Motor neuron (in vitro differentiated cells): ENCODE measurements at regions of chr2 and their contacts with region 1.

Region 1: GRCh38 chr2:200578778-200579177 is 7.0 kb upstream of the AOX1 start:
- ATAC-seq: peak in 2 of 8 experiments; percentile 53 to 62
- H3K4me3 ChIP-seq: no peak overlapping the region
- H3K27ac ChIP-seq: no peak overlapping the region
- H3K4me1 ChIP-seq: no peaks in the 10 kb centered on the region

Region 2: DNA sequence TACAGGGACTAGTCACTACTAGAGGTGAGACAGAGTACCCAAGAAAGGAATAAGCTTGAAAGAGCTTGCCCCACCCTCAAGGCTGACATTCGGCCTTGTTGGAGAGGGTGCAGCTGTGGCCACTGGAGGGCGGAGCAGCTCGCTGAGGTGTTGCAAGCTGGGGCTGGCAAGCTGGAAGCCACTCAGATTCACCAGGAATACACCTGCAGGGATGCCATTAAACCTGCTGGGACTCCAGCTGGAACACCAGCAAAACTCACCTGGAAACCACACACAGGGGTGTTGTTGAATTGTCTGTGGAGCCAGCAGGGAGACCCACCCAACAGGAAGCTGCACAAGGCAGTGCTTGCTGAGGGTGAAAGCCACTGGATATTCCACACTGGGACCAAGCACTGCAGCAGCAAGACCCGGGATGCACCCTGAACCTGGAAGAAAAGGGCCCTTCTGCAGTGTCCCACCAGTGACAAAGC is 95.0 kb before region 1 on chr2:
- in situ Hi-C with region 1: no loop called
- ATAC-seq: peak; percentile 30 to 79 (median 52)
- H3K4me3 ChIP-seq: no peak overlapping the region
- H3K27ac ChIP-seq: no peak overlapping the region
- H3K4me1 ChIP-seq: peaks cover 0 to 2% of the 10 kb centered on the region in 2 donors

Region 3: DNA sequence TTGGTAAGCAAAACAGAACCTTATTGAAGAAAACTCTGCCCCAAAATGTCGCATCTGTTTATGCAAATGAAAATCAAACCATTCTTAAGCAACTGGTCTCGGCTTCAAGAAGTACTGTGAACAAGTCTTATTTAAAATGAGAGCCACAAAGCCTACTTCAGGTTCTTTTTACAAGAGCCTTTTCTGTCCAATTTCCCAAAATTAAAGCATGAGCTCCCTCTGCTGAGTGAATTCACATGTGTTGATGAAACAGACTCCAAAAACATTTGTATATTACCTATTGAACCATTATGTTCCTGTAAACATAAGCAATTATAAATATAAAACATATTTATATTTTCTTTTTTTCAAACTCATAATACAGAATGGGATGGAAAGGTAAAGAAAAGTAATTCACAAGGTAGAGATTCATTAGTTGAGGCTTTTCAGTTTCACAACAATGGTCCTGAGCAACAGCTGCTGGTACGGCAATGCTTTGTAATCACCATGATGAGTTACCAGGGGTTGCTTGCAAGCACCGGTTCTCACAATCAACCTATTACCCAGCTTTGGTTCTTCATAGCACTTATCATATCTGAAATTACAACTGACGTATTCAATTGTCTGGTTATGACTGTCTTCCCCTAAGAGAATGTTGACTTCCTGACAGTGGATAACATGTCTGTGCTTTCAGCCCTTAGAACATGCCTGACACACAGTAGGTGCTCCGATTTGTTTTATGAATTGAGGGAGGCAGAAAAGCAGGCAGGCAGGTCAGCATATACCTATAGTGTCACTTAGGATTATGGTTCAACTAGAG is 124.5 kb after region 1 on chr2:
- in situ Hi-C with region 1: loop called in 1 of 9 experiments (anchors 10 kb)
- ATAC-seq: peak in 4 of 8 experiments; percentile 43 to 67 (median 58)
- H3K4me3 ChIP-seq: no peak overlapping the region
- H3K27ac ChIP-seq: no peak overlapping the region
- H3K4me1 ChIP-seq: peaks cover under 1 to 7% of the 10 kb centered on the region in 2 donors